K562 (cell line): ENCODE measurements at regions of chr17 and their contacts with region 1.

Region 1: GRCh38 chr17:40696537-40697072 is 6.9 kb downstream of the KRT24 start:
- DNase-seq: no peak
- ATAC-seq: no peak
- H3K4me3 ChIP-seq: no peak overlapping the region
- H3K27ac ChIP-seq: no peak overlapping the region
- H3K4me1 ChIP-seq: no peaks in the 10 kb centered on the region
- H3K27me3 ChIP-seq: peaks cover 38 to 40% of the 10 kb centered on the region in 2 experiments
- CTCF ChIP-seq: no peak
- EP300 ChIP-seq: no peak
- POLR2A ChIP-seq: no peak
- RAD21 ChIP-seq: no peak

Region 2: GRCh38 chr17:40686192-40686591 is 10.4 kb before region 1 on chr17:
- CTCF ChIA-PET with region 1: no interaction called
- POLR2A ChIA-PET with region 1: interaction called, 12 read pairs
- in situ Hi-C with region 1: no loop called
- intact Hi-C with region 1: no loop called
- DNase-seq: no peak
- ATAC-seq: no peak
- H3K4me3 ChIP-seq: no peak overlapping the region
- H3K27ac ChIP-seq: no peak overlapping the region
- H3K4me1 ChIP-seq: no peaks in the 10 kb centered on the region
- H3K27me3 ChIP-seq: peaks cover 9 to 21% of the 10 kb centered on the region in 2 experiments; a peak in 4 of 5 replicates
- CTCF ChIP-seq: no peak
- EP300 ChIP-seq: no peak
- POLR2A ChIP-seq: no peak
- RAD21 ChIP-seq: no peak